PC-3 (cell line): ENCODE measurements at regions of chr2 and their contacts with region 1.

Region 1: GRCh38 chr2:172427256-172427989 is at the start of gene ITGA6:
- DNase-seq: peak; percentile 92
- ATAC-seq: peak; percentile 79
- H3K4me3 ChIP-seq: peak within 1 kb of the TSS; percentile 82
- H3K27ac ChIP-seq: peak within 1 kb of the TSS; percentile 64
- H3K4me1 ChIP-seq: peaks cover 29% of the 10 kb centered on the region
- H3K27me3 ChIP-seq: no peaks in the 10 kb centered on the region
- CTCF ChIP-seq: peak; percentile 29; the same call in 1 of the 2 replicates
- total RNA-seq, gene ITGA6: 181 and 204 TPM in 2 replicates

Region 2: GRCh38 chr2:171939743-171940071 is 487.7 kb before region 1 on chr2:
- CTCF ChIA-PET with region 1: no interaction called
- POLR2A ChIA-PET with region 1: interaction called, 12 read pairs
- intact Hi-C with region 1: no loop called
- DNase-seq: no peak
- ATAC-seq: no peak
- H3K4me3 ChIP-seq: no peak overlapping the region
- H3K27ac ChIP-seq: no peak overlapping the region
- H3K4me1 ChIP-seq: no peaks in the 10 kb centered on the region
- H3K27me3 ChIP-seq: no peaks in the 10 kb centered on the region
- CTCF ChIP-seq: no peak

Region 3: GRCh38 chr2:172172513-172173173 is 254.8 kb before region 1 on chr2:
- CTCF ChIA-PET with region 1: interaction called, 3 read pairs
- POLR2A ChIA-PET with region 1: interaction called, 3 read pairs
- intact Hi-C with region 1: loop called (anchors 1 kb)
- DNase-seq: peak; percentile 85
- ATAC-seq: peak; percentile 96
- H3K4me3 ChIP-seq: peak overlapping the region; percentile 65
- H3K27ac ChIP-seq: peak overlapping the region; percentile 42
- H3K4me1 ChIP-seq: peaks cover 29% of the 10 kb centered on the region
- H3K27me3 ChIP-seq: no peaks in the 10 kb centered on the region
- CTCF ChIP-seq: peak; percentile 85

Region 4: DNA sequence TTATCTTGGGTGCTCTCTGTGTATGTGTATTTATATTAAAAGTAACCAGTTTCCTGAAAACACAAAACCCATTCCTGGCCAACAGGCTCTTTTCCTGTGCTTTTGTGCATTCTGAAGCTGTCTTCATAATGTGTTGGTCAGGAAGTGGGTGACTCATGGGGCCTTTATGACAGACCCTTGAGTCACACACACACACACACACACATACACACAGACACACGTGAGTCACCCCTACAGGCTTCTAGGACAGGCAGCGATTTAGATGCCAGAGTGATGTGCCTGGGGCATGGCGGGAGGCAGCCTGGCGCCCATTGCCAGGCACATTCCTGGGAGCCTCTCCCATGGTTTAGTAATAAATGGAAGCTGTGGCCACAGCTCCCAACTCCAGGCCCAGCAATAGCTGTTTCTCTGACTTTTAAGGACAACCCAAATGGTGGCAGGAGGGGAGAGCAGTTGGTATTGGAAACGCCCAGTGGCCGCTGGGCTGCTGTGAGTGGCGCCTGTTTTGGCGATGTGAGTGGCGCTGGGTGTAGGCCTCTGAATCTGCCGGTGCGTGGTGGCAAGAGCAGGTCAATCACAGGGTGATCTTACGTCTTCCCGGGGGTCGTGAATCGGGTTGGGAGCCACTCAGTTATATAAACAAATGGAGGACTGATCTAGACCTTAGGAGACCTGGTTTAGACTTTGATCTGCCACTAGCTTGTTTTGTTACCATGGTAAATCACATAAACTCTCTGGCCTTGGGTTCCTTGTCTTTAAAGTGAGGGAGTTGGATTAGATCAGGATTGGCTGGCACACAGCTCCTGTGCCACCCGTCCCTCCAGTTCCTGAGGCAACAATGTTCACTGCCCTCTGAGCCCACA is 174.0 kb before region 1 on chr2:
- CTCF ChIA-PET with region 1: no interaction called
- POLR2A ChIA-PET with region 1: no interaction called
- intact Hi-C with region 1: loop called (anchors 2 kb)
- DNase-seq: peak; percentile 98
- ATAC-seq: peak; percentile 60
- H3K4me3 ChIP-seq: no peak overlapping the region
- H3K27ac ChIP-seq: peak overlapping the region; percentile 90
- H3K4me1 ChIP-seq: peaks cover 55% of the 10 kb centered on the region
- H3K27me3 ChIP-seq: no peaks in the 10 kb centered on the region
- CTCF ChIP-seq: no peak

Region 5: DNA sequence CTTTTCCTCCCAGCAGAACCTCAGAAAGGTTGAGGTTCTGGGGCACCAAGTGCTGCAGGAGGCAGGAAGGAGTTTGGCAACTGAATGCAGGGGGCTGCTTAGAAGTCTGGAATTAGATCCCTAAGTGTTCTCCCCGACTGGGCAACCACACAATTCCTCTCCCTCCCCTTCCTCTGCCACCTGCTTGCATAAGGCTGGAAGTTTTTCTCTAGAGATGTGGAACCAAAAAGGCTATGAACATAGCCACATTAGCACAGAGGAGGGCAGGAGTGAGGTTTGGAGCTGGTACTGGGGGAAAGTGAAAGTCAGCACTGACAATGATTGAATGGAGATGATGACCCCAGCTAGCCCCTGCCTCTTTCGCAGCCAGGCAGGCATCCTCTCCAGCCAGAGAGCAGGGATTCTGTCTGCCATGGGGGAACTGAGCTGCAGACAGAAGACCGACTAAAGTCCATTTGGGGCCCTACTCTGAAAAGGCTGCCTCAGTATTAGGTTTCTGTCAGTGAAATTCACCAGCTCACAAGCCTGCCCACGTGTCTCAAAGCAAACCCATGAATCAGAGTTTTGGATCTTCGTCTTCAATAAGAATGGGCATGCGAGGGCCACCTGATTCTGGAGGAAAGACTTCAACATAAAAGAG is 87.9 kb before region 1 on chr2:
- CTCF ChIA-PET with region 1: no interaction called
- POLR2A ChIA-PET with region 1: no interaction called
- intact Hi-C with region 1: loop called (anchors 2 kb)
- DNase-seq: no peak
- ATAC-seq: no peak
- H3K4me3 ChIP-seq: no peak overlapping the region
- H3K27ac ChIP-seq: no peak overlapping the region
- H3K4me1 ChIP-seq: peaks cover 31% of the 10 kb centered on the region
- H3K27me3 ChIP-seq: no peaks in the 10 kb centered on the region
- CTCF ChIP-seq: no peak

Region 6: DNA sequence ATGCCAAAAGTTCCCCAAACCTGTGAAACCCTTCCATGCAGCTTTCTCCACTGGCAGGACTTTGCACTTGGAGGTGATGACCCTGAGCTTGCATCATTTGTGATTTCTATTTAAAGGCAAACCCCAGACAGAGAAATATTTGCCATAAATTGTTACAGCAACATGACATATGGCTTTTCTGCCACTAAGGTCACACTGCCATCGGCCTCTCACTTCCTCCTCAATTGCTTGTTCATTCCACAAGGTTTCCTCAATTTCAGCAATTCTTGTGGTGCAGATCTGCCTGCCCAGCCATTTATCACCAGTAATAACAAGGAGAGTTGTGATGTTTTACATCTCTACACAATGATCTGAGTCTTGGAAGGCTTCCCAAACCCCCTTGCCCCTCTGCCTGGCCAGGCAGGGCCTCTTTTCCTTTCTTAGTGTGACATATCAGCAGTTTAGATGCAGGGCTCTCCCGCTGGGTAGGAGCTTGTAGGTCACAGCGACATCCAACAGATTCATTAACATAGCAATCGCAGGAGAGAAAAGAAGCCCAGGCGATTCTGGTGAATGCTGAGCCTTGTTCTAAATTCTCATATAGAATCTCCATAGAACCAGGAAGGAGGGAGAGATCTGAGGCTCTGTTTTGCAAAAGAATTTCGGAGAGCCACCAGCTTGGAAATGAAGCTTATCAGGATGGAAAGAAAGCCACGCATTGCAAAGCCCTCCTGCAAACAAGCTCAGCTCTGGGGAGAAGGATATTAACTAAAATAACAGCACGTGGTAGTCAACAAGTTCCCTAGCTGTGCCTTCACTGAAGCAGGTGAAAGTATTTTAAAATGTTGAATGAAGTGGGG is 46.8 kb before region 1 on chr2:
- CTCF ChIA-PET with region 1: no interaction called
- POLR2A ChIA-PET with region 1: no interaction called
- intact Hi-C with region 1: no loop called
- DNase-seq: no peak
- ATAC-seq: no peak
- H3K4me3 ChIP-seq: no peak overlapping the region
- H3K27ac ChIP-seq: no peak overlapping the region
- H3K4me1 ChIP-seq: no peaks in the 10 kb centered on the region
- H3K27me3 ChIP-seq: no peaks in the 10 kb centered on the region
- CTCF ChIP-seq: no peak

Region 7: GRCh38 chr2:172442072-172442895 is 14.9 kb after region 1 on chr2:
- CTCF ChIA-PET with region 1: interaction called, 7 read pairs
- POLR2A ChIA-PET with region 1: interaction called, 13 read pairs
- intact Hi-C with region 1: loop called (anchors 1 kb)
- DNase-seq: peak; percentile 99
- ATAC-seq: peak; percentile 81
- H3K4me3 ChIP-seq: peak overlapping the region; percentile 47
- H3K27ac ChIP-seq: peak overlapping the region; percentile 97
- H3K4me1 ChIP-seq: peaks cover 77% of the 10 kb centered on the region
- H3K27me3 ChIP-seq: no peaks in the 10 kb centered on the region
- CTCF ChIP-seq: no peak